KBM-7 (cell line): ENCODE measurements at regions of chr5 and their contacts with region 1.

Region 1: GRCh38 chr5:1641560-1642166 is 117.9 kb upstream of the LPCAT1 start:
- DNase-seq: peak; percentile 81

Region 2: GRCh38 chr5:926417-927171 is 715.1 kb before region 1 on chr5:
- in situ Hi-C with region 1: loop called (anchors 25 kb)
- DNase-seq: no peak